H1 (cell line): ENCODE measurements at regions of chr2 and their contacts with region 1.

Region 1: DNA sequence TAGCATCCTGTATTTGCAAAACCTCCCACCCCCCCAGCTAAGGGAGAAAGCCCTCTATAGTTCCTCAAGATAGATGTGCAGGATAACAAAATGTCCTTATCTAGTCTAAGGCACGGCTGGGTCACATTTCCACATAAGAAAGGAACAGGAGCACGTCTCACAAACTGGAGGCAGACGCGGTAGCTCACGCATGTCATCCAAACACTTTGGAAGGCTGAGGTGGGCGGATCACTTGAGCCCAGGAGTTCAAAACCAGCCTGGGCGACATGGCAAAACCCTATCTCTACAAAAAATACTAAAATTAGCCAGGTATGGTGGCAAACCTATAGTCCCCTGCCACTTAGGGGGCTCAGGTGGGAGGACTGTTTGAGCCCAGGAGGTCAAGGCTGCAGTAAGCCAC is 9.3 kb downstream of the SF3B1 start:
- DNase-seq: no peak
- H3K4me3 ChIP-seq: no peak overlapping the region
- H3K27ac ChIP-seq: no peak overlapping the region
- H3K4me1 ChIP-seq: peaks cover 0 to 3% (median under 1%) of the 10 kb centered on the region in 4 experiments; a peak in 2 of 7 replicates
- H3K27me3 ChIP-seq: no peaks in the 10 kb centered on the region
- CTCF ChIP-seq: no peak
- EP300 ChIP-seq: no peak
- POLR2A ChIP-seq: no peak
- RAD21 ChIP-seq: no peak

Region 2: DNA sequence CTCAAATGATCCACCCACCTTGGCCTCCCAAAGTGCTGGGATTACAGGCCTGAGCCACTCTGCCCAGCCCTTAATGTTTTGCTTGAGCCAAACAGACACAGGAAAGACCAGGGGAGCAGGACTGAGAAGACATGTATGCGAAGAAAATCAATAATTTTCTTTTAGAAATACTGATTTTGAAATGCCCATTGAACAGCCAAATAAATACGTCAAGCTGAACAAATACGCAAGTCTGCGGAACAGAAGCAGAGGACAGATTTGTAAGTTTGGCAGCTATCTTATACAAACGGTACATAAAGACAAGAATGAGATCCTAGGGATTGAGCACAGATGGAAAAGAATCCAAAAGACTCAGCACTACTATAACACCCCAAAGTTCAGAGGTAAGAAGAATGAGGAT is 11.5 kb before region 1 on chr2:
- CTCF ChIA-PET with region 1: no interaction called
- POLR2A ChIA-PET with region 1: interaction called, 11 read pairs
- DNase-seq: no peak
- H3K4me3 ChIP-seq: no peak overlapping the region
- H3K27ac ChIP-seq: no peak overlapping the region
- H3K4me1 ChIP-seq: no peaks in the 10 kb centered on the region
- H3K27me3 ChIP-seq: no peaks in the 10 kb centered on the region
- CTCF ChIP-seq: no peak
- EP300 ChIP-seq: no peak
- POLR2A ChIP-seq: no peak
- RAD21 ChIP-seq: no peak

Region 3: GRCh38 chr2:197576631-197577030 is 151.1 kb after region 1 on chr2:
- CTCF ChIA-PET with region 1: no interaction called
- POLR2A ChIA-PET with region 1: no interaction called
- DNase-seq: no peak
- H3K4me3 ChIP-seq: no peak overlapping the region
- H3K27ac ChIP-seq: no peak overlapping the region
- H3K4me1 ChIP-seq: peaks cover 0 to 17% (median 5%) of the 10 kb centered on the region in 4 experiments; a peak in 4 of 7 replicates
- H3K27me3 ChIP-seq: no peaks in the 10 kb centered on the region; a peak in 1 of 7 replicates
- CTCF ChIP-seq: no peak
- EP300 ChIP-seq: no peak
- POLR2A ChIP-seq: no peak
- RAD21 ChIP-seq: no peak